ENCODE measurements at regions of chr6 and their contacts with region 1.

Region 1: GRCh38 chr6:159720708-159721107 is 6.6 kb upstream of the WTAP start:
- DNase-seq: peak; percentile 42
- ATAC-seq: peak; percentile 67
- H3K4me3 ChIP-seq: no peak overlapping the region
- H3K27ac ChIP-seq: no peak overlapping the region
- H3K4me1 ChIP-seq: peaks cover 5 to 7% of the 10 kb centered on the region in 2 experiments; a peak in 3 of 4 replicates
- H3K27me3 ChIP-seq: no peaks in the 10 kb centered on the region
- CTCF ChIP-seq: peak; percentile 32 to 55 (median 34); a peak in 4 of 6 replicates
- POLR2A ChIP-seq: no peak
- RAD21 ChIP-seq: peak; percentile 48; the same call in 1 of the 2 replicates

Region 2: GRCh38 chr6:159645640-159646039 is 75.1 kb before region 1 on chr6:
- CTCF ChIA-PET with region 1: no interaction called
- POLR2A ChIA-PET with region 1: no interaction called
- RAD21 ChIA-PET with region 1: no interaction called
- intact Hi-C with region 1: no loop called
- DNase-seq: no peak
- ATAC-seq: peak; percentile 36; the same call in 1 of the 2 replicates
- H3K4me3 ChIP-seq: no peak overlapping the region
- H3K27ac ChIP-seq: no peak overlapping the region
- H3K4me1 ChIP-seq: peaks cover 10 to 11% of the 10 kb centered on the region in 2 experiments
- H3K27me3 ChIP-seq: no peaks in the 10 kb centered on the region; the same call in 1 of the 2 replicates
- CTCF ChIP-seq: no peak
- POLR2A ChIP-seq: no peak
- RAD21 ChIP-seq: no peak

Region 3: GRCh38 chr6:159852877-159853276 is 132.2 kb after region 1 on chr6:
- CTCF ChIA-PET with region 1: interaction called, 3 read pairs
- POLR2A ChIA-PET with region 1: no interaction called
- RAD21 ChIA-PET with region 1: no interaction called
- intact Hi-C with region 1: loop called (anchors 2 kb)
- DNase-seq: no peak
- ATAC-seq: peak; percentile 58; the same call in 1 of the 2 replicates
- H3K4me3 ChIP-seq: no peak overlapping the region
- H3K27ac ChIP-seq: no peak overlapping the region
- H3K4me1 ChIP-seq: no peaks in the 10 kb centered on the region
- H3K27me3 ChIP-seq: no peaks in the 10 kb centered on the region
- CTCF ChIP-seq: peak in 2 of 3 experiments; percentile 14 to 49; a peak in 2 of 6 replicates
- POLR2A ChIP-seq: no peak
- RAD21 ChIP-seq: peak; percentile 61

Region 4: GRCh38 chr6:160101277-160102215 is 380.8 kb after region 1 on chr6:
- CTCF ChIA-PET with region 1: no interaction called
- POLR2A ChIA-PET with region 1: no interaction called
- RAD21 ChIA-PET with region 1: no interaction called
- intact Hi-C with region 1: no loop called
- DNase-seq: no peak
- ATAC-seq: no peak
- H3K4me3 ChIP-seq: no peak overlapping the region
- H3K27ac ChIP-seq: no peak overlapping the region
- H3K4me1 ChIP-seq: no peaks in the 10 kb centered on the region
- H3K27me3 ChIP-seq: no peaks in the 10 kb centered on the region
- CTCF ChIP-seq: no peak
- POLR2A ChIP-seq: no peak
- RAD21 ChIP-seq: no peak

Measured in HCT116 (cell line).